Mammary epithelial cell (primary cell): ENCODE measurements at regions of chr12 and their contacts with region 1.

Region 1: GRCh38 chr12:117587631-117588287 is 226.3 kb upstream of the NOS1 start:
- DNase-seq: peak; percentile 4
- H3K4me3 ChIP-seq: no peak overlapping the region
- H3K27ac ChIP-seq: no peak overlapping the region
- H3K4me1 ChIP-seq: no peaks in the 10 kb centered on the region
- H3K27me3 ChIP-seq: no peaks in the 10 kb centered on the region
- CTCF ChIP-seq: peak; percentile 64 to 79

Region 2: DNA sequence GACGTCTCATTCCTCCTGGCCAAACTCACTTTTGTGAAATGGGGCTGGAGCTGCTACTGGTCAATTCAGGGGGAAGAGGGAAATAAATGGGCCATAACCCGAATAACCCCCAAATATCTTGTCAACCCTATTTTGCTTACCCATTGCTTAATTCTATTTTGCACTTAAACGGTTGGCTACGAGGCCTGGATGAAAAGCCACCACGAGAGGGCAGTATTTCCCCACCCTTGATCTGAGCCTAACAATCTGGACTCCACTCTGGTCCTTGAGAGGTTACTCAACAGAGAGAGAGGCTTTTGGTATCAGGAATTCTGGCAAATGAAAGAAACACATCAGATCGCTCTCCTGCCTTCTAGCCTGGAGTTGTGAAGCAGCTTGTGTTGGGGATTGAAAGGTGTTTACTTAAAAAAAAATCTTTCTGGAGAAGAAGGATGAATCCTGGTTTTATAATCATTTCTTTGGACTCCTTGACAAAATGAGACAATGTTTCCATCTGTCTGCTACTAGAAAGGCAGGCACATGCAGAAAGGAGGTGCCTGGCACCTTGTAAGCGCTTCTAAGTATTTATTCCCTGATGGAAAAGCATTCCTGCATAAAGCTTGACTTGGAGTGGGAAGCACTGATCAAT is 375.1 kb before region 1 on chr12:
- CTCF ChIA-PET with region 1: no interaction called
- dilution Hi-C with region 1: no loop called
- in situ Hi-C with region 1: no loop called
- intact Hi-C with region 1: loop called (anchors 1 kb)
- DNase-seq: peak; percentile 55
- H3K4me3 ChIP-seq: no peak overlapping the region
- H3K27ac ChIP-seq: no peak overlapping the region
- H3K4me1 ChIP-seq: no peaks in the 10 kb centered on the region
- H3K27me3 ChIP-seq: peaks cover 2% of the 10 kb centered on the region
- CTCF ChIP-seq: peak; percentile 85 to 88

Region 3: GRCh38 chr12:117236456-117237001 is 351.2 kb before region 1 on chr12:
- CTCF ChIA-PET with region 1: no interaction called
- dilution Hi-C with region 1: no loop called
- in situ Hi-C with region 1: no loop called
- intact Hi-C with region 1: loop called (anchors 5 kb)
- DNase-seq: peak; percentile 19
- H3K4me3 ChIP-seq: no peak overlapping the region
- H3K27ac ChIP-seq: no peak overlapping the region
- H3K4me1 ChIP-seq: no peaks in the 10 kb centered on the region
- H3K27me3 ChIP-seq: no peaks in the 10 kb centered on the region
- CTCF ChIP-seq: peak; percentile 46 to 57

Region 4: DNA sequence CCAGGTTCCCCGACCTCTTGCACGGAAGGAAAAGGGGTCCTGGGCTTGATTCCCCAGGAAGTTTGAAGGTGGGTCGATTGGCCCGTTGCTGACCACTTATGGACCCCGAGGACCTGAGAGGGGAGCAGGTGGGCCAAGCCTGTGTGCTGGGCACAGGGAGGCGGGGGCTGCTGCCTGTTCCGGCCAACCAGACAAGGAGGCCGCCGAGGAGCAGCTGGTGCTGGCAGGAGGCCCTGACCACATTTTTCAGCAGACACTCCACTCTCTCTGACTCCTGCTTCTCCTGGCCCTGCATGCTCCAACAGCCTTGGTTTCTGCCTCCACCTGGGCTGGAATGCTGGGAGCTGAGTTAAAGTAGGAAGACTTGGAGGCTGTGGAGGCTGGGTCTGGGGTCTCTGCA is 269.2 kb before region 1 on chr12:
- CTCF ChIA-PET with region 1: no interaction called
- dilution Hi-C with region 1: no loop called
- in situ Hi-C with region 1: no loop called
- intact Hi-C with region 1: no loop called
- DNase-seq: no peak
- H3K4me3 ChIP-seq: no peak overlapping the region
- H3K27ac ChIP-seq: no peak overlapping the region
- H3K4me1 ChIP-seq: no peaks in the 10 kb centered on the region
- H3K27me3 ChIP-seq: no peaks in the 10 kb centered on the region
- CTCF ChIP-seq: no peak

Region 5: DNA sequence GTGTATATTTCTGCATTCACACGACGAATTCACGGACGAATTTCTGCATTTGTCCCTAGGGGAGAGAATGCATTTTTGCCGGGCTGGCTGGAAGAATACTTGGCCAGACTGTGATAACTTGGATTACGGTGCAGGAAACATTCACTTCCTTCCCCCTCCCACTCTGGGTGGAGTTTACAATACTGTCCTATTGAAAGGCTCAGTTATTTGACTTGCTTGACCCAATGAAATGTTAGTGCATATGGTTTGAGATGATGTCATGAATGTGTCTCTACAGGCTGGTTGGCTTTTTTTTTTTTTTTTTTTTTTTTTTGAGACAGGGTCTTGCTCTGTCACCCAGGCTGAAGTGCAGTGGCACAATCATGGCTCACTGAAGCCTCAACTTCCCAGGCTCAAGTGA is 135.6 kb before region 1 on chr12:
- CTCF ChIA-PET with region 1: no interaction called
- dilution Hi-C with region 1: no loop called
- in situ Hi-C with region 1: no loop called
- intact Hi-C with region 1: no loop called
- DNase-seq: no peak
- H3K4me3 ChIP-seq: no peak overlapping the region
- H3K27ac ChIP-seq: no peak overlapping the region
- H3K4me1 ChIP-seq: no peaks in the 10 kb centered on the region
- H3K27me3 ChIP-seq: no peaks in the 10 kb centered on the region
- CTCF ChIP-seq: no peak